Right cardiac atrium (tissue), 5 donors: ENCODE measurements at regions of chr5 and their contacts with region 1.

Region 1: DNA sequence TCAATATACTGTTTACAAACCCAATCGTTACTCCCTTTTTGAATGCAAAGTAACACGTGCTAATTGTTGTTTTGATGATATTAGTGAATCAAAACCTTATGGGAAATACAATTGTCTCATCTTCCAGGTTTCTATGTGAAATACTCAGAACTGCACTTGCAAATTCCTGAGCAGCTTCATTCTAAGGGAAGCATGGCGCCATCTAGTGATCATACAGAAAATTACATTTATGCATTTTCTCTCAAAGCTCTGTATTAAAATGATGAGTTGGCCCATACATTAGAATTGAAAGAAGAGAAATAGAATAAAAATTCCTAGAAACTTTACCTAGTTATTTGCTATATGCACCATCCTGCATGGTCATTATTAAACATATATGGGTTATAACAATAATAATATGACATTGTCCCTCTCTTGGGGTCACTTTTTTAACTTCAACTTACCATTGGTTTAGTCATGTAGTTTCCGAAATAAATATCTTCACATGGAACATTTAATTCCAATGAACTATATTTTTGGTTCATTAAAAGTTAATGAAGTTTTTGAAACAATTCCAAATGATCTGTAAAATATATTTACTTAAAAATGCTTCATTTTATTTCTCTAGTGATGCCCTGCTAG is 220.0 kb downstream of the PDE4D start:
- DNase-seq: no peak
- ATAC-seq: no peak
- H3K4me3 ChIP-seq: no peak overlapping the region
- H3K27ac ChIP-seq: no peak overlapping the region
- H3K4me1 ChIP-seq: no peaks in the 10 kb centered on the region
- H3K27me3 ChIP-seq: no peaks in the 10 kb centered on the region

Region 2: DNA sequence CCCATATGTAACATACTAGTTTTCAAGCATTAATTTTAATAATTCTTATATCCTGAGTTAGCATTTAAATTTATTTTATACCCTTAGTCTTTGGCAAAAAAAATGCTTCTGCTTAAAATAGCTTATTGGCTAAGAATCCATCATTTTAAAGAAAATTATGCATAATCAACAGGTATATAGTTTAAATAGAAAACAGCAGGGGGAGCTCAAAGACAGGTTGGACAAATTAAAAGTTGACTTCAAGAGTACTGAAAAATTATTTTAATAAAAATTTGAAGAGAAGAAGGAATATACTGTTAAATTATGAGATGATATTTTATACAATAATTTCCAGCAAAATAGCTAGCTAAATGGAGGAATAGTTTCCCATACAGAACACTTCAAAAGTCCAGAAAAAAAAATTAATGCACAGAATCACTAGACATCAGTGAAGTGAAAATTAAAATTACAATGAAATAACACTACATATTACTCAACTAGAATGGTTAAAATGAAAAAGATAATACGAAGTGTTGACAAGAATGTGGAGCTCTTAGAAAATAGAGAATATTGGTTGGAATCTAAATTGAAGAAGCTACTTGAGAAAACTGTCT is 167.2 kb before region 1 on chr5:
- intact Hi-C with region 1: loop called (anchors 2 to 5 kb)
- DNase-seq: no peak
- ATAC-seq: no peak
- H3K4me3 ChIP-seq: no peak overlapping the region
- H3K27ac ChIP-seq: no peak overlapping the region
- H3K4me1 ChIP-seq: no peaks in the 10 kb centered on the region
- H3K27me3 ChIP-seq: no peaks in the 10 kb centered on the region

Region 3: GRCh38 chr5:59782856-59783255 is 109.3 kb after region 1 on chr5:
- intact Hi-C with region 1: no loop called
- DNase-seq: no peak
- ATAC-seq: no peak
- H3K4me3 ChIP-seq: no peak overlapping the region
- H3K27ac ChIP-seq: no peak overlapping the region
- H3K4me1 ChIP-seq: no peaks in the 10 kb centered on the region
- H3K27me3 ChIP-seq: no peaks in the 10 kb centered on the region

Region 4: GRCh38 chr5:59799668-59800346 is 126.3 kb after region 1 on chr5:
- intact Hi-C with region 1: loop called in 1 of 4 experiments (anchors 10 kb)
- DNase-seq: no peak
- ATAC-seq: peak; percentile 73 to 74
- H3K4me3 ChIP-seq: peak overlapping the region; percentile 15
- H3K27ac ChIP-seq: no peak overlapping the region
- H3K4me1 ChIP-seq: peaks cover 2% of the 10 kb centered on the region
- H3K27me3 ChIP-seq: no peaks in the 10 kb centered on the region